GM13977 (cell line): ENCODE measurements at regions of chr1 and their contacts with region 1.

Region 1: GRCh38 chr1:65209005-65209885 is 61.2 kb downstream of the AK4 start:
- DNase-seq: peak; percentile 45
- CTCF ChIP-seq: peak; percentile 54

Region 2: DNA sequence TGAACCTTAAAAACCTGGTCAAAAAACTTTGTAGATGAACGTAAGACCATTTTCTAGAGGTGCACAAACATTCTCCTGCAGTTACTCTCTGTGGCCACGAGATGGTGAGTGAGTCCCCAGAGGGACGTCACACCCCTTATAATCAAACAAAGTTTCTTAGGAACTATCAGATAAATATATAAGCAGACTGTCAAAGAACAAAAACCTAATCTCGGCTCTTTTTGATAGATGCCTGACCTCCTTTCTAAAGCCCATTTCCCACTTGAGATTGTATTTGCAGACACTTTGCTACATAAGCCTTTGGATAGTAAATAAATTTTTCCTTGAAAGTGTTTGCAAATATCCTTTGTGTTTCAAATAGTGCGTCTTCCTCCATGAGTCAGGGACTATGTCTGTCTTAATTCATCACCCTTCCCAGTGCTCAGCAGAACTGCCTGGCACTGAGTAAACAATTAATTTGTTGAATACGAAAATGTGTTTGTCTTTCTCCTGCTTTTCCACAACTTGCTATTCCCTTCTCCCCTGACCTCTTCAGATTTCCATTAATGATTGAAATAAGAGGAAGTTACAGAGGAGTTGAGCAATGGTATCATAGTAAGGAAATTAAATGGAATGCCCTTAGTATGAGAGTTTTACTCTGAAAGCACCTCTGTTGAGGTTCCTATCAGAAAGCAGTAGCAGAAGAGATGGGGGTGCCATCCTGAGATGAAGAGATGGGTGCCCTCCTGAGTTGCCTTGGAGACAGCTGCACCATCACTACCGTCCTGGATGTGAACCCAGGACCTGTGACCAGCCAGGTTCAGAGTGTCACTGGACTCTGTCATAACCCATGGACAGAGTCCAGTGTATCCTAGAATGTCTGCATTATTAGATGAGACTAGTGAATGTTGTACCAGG is 522.2 kb before region 1 on chr1:
- in situ Hi-C with region 1: loop called (anchors 25 kb)
- DNase-seq: peak; percentile 57
- CTCF ChIP-seq: peak; percentile 76

Region 3: GRCh38 chr1:65075123-65075976 is 133.9 kb before region 1 on chr1:
- in situ Hi-C with region 1: loop called (anchors 10 kb)
- DNase-seq: peak; percentile 75
- CTCF ChIP-seq: peak; percentile 84